Posterior vena cava (tissue), 2 donors: ENCODE measurements at regions of chr15 and their contacts with region 1.

Region 1: DNA sequence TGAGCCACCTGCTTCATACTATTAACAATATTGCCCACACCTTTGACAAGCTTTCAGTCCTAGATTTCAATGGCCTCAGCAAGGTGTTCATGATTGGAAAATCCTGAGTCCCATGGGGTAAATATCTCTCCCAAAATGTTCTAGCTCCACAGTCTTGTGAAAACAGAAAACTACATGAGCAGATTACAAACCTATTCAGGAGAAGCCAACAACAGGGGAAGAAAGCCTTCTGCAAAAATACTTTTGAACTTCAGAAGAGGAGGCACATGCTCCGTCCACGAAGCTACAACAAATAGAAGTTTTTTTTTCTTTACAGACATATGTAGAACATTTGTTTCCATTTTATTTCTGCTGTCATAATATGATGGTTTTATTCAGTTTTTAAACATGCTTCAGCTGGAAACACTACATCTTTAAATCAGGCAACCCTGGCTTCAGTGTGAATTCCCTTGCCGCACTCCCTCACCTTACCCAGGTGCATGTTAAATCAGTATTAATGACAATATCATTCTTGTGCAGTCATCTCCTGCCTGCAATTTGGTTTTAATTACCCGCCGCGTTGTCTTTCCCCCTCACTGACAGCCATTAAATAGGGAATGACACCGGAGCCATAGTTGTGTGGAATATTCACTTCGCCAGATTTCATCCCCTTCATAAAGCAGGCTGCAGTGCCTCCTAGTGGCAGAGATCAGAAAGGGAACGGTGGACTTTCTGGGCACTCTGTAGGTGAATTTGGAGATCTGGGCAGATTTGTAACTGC is 725.5 kb upstream of the ARRDC4 start:
- DNase-seq: no peak

Region 2: GRCh38 chr15:96356494-96357455 is 878.3 kb before region 1 on chr15:
- intact Hi-C with region 1: loop called in 1 of 2 experiments (anchors 10 kb)
- DNase-seq: peak; percentile 93